CD8-positive, alpha-beta memory T cell (primary cell): ENCODE measurements at regions of chr20 and their contacts with region 1.

Region 1: GRCh38 chr20:21571841-21572690 is 58.2 kb upstream of the NKX2-2 start:
- DNase-seq: peak in 1 of 5 donors; percentile 16
- H3K4me3 ChIP-seq: no peak overlapping the region
- H3K4me3 Mint-ChIP-seq: no peak overlapping the region
- H3K27ac ChIP-seq: no peak overlapping the region
- H3K27ac Mint-ChIP-seq: no peak overlapping the region
- H3K4me1 ChIP-seq: no peaks in the 10 kb centered on the region
- H3K4me1 Mint-ChIP-seq: no peaks in the 10 kb centered on the region
- H3K27me3 ChIP-seq: peaks cover 3% of the 10 kb centered on the region
- H3K27me3 Mint-ChIP-seq: peaks cover 6 to 9% of the 10 kb centered on the region in 2 donors

Region 2: GRCh38 chr20:21433327-21433890 is 138.7 kb before region 1 on chr20:
- CTCF ChIA-PET with region 1: no interaction called
- POLR2A ChIA-PET with region 1: no interaction called
- DNase-seq: no peak
- H3K4me3 ChIP-seq: no peak overlapping the region
- H3K4me3 Mint-ChIP-seq: no peak overlapping the region
- H3K27ac ChIP-seq: no peak overlapping the region
- H3K27ac Mint-ChIP-seq: no peak overlapping the region
- H3K4me1 ChIP-seq: no peaks in the 10 kb centered on the region
- H3K4me1 Mint-ChIP-seq: no peaks in the 10 kb centered on the region
- H3K27me3 ChIP-seq: peaks cover 10% of the 10 kb centered on the region
- H3K27me3 Mint-ChIP-seq: peaks cover 7 to 64% of the 10 kb centered on the region in 2 donors

Region 3: DNA sequence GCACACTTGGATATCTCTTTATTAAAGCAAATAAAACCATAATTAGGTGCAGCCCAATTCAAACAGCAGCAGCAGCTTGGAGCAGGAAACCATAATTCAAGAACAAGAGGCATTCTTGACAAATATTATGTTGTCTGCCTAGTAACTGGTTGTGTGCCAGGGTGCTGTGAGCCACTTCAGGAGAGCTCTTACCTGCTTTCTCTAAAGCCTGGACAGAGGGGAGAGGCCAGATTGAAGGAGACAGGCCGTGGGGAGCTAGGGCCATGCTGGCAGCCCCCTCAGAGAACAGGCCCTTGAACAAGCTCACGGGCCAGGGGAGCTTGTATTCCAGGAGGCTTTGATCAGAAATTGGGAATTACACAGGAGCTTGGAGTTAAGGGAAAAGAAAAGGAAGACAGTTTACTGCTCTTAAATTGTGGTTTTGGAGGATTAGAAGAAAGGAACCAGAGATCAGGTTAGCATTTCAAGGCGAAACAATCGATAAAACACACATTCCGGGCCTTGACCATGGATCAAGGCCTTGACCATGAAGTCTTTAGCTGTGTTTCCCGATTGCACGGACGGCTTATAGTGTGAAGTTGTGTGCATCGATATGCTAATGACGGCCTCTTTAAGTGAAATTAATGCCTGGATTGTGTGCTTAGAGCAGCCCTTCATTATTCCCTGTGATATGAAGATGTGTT is 11.6 kb after region 1 on chr20:
- CTCF ChIA-PET with region 1: interaction called, 16 read pairs
- POLR2A ChIA-PET with region 1: no interaction called
- DNase-seq: no peak
- H3K4me3 ChIP-seq: no peak overlapping the region
- H3K4me3 Mint-ChIP-seq: no peak overlapping the region
- H3K27ac ChIP-seq: no peak overlapping the region
- H3K27ac Mint-ChIP-seq: no peak overlapping the region
- H3K4me1 ChIP-seq: no peaks in the 10 kb centered on the region
- H3K4me1 Mint-ChIP-seq: no peaks in the 10 kb centered on the region
- H3K27me3 ChIP-seq: peaks cover 7% of the 10 kb centered on the region
- H3K27me3 Mint-ChIP-seq: peaks cover 10 to 49% of the 10 kb centered on the region in 2 donors

Region 4: DNA sequence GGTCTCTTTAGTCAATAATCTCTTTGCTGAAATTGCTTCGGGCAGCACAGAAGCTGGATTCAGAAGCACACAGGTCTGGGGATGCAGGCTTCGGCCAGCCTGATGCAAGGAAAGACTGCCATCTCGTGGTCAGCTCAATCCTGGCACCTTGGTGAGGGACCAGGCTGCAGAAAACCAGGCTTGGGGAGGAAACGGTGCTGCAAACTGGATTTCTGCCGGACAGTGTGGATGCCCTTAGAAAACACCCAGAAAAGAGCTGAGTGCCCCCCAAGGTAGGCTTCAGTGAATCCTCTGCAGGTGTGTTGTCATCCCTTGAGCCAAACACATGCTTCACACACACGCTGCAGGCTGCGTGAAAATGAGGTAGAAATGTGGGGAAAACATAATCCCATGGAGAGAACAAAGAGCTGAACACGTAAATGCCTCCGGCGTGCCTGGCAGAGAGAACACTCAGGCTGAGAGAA is 43.6 kb after region 1 on chr20:
- CTCF ChIA-PET with region 1: no interaction called
- POLR2A ChIA-PET with region 1: no interaction called
- DNase-seq: peak in 1 of 5 donors; percentile 15
- H3K4me3 ChIP-seq: no peak overlapping the region
- H3K4me3 Mint-ChIP-seq: peak overlapping the region in 1 of 7 donors; percentile 37
- H3K27ac ChIP-seq: no peak overlapping the region
- H3K27ac Mint-ChIP-seq: no peak overlapping the region
- H3K4me1 ChIP-seq: no peaks in the 10 kb centered on the region
- H3K4me1 Mint-ChIP-seq: no peaks in the 10 kb centered on the region
- H3K27me3 ChIP-seq: no peaks in the 10 kb centered on the region
- H3K27me3 Mint-ChIP-seq: peaks cover 12 to 27% of the 10 kb centered on the region in 2 donors